OCI-LY7 (cell line): ENCODE measurements at regions of chr18 and their contacts with region 1.

Region 1: GRCh38 chr18:49813319-49814146 is at the start of gene ACAA2:
- DNase-seq: peak; percentile 70
- H3K4me3 ChIP-seq: peak within 1 kb of the TSS; percentile 85
- H3K27ac ChIP-seq: peak within 1 kb of the TSS; percentile 88
- H3K4me1 ChIP-seq: peaks cover 9% of the 10 kb centered on the region
- CTCF ChIP-seq: no peak
- total RNA-seq, gene ACAA2: 30.8 and 34.3 TPM in 2 replicates

Region 2: GRCh38 chr18:49491857-49492693 is 321.5 kb before region 1 on chr18:
- CTCF ChIA-PET with region 1: no interaction called
- POLR2A ChIA-PET with region 1: interaction called, 4 read pairs
- intact Hi-C with region 1: loop called (anchors 5 kb)
- DNase-seq: peak; percentile 95
- H3K4me3 ChIP-seq: peak within 1 kb of the TSS; percentile 100
- H3K27ac ChIP-seq: peak within 1 kb of the TSS; percentile 89
- H3K4me1 ChIP-seq: peaks cover 42% of the 10 kb centered on the region
- CTCF ChIP-seq: no peak

Region 3: GRCh38 chr18:49645841-49646351 is 167.6 kb before region 1 on chr18:
- CTCF ChIA-PET with region 1: no interaction called
- POLR2A ChIA-PET with region 1: no interaction called
- intact Hi-C with region 1: no loop called
- DNase-seq: no peak
- H3K4me3 ChIP-seq: no peak overlapping the region
- H3K27ac ChIP-seq: no peak overlapping the region
- H3K4me1 ChIP-seq: no peaks in the 10 kb centered on the region
- CTCF ChIP-seq: no peak

Region 4: GRCh38 chr18:49959176-49959575 is 145.6 kb after region 1 on chr18:
- CTCF ChIA-PET with region 1: no interaction called
- POLR2A ChIA-PET with region 1: no interaction called
- intact Hi-C with region 1: no loop called
- DNase-seq: no peak
- H3K4me3 ChIP-seq: no peak overlapping the region
- H3K27ac ChIP-seq: no peak overlapping the region
- H3K4me1 ChIP-seq: no peaks in the 10 kb centered on the region
- CTCF ChIP-seq: no peak

Region 5: GRCh38 chr18:50374753-50375391 is 561.3 kb after region 1 on chr18 and contains the start of gene SKA1:
- CTCF ChIA-PET with region 1: no interaction called
- POLR2A ChIA-PET with region 1: no interaction called
- intact Hi-C with region 1: loop called (anchors 10 kb)
- DNase-seq: peak; percentile 89
- H3K4me3 ChIP-seq: peak within 1 kb of the TSS; percentile 87
- H3K27ac ChIP-seq: peak within 1 kb of the TSS; percentile 43
- H3K4me1 ChIP-seq: peaks cover 17% of the 10 kb centered on the region
- CTCF ChIP-seq: no peak
- total RNA-seq, gene SKA1: 22.2 and 28.8 TPM in 2 replicates